Activated CD8-positive, alpha-beta memory T cell treated with anti-CD3 and anti-CD28 coated beads, Interleukin-2, amount 10 ng/mL, durations not matched to agents 7 days and 5 days (primary cell): ENCODE measurements at regions of chr2 and their contacts with region 1.

Region 1: GRCh38 chr2:25276569-25277465 is 64.9 kb downstream of the DNMT3A start:
- DNase-seq: peak; percentile 84
- ATAC-seq: peak; percentile 79
- H3K4me3 Mint-ChIP-seq: peak overlapping the region; percentile 65
- H3K27ac Mint-ChIP-seq: peak overlapping the region; percentile 92
- H3K4me1 Mint-ChIP-seq: peaks cover 70% of the 10 kb centered on the region
- H3K27me3 Mint-ChIP-seq: no peaks in the 10 kb centered on the region

Region 2: GRCh38 chr2:25257931-25258846 is 18.6 kb before region 1 on chr2:
- CTCF ChIA-PET with region 1: interaction called, 13 read pairs
- DNase-seq: no peak
- ATAC-seq: no peak
- H3K4me3 Mint-ChIP-seq: no peak overlapping the region
- H3K27ac Mint-ChIP-seq: no peak overlapping the region
- H3K4me1 Mint-ChIP-seq: peaks cover 22% of the 10 kb centered on the region
- H3K27me3 Mint-ChIP-seq: no peaks in the 10 kb centered on the region

Region 3: DNA sequence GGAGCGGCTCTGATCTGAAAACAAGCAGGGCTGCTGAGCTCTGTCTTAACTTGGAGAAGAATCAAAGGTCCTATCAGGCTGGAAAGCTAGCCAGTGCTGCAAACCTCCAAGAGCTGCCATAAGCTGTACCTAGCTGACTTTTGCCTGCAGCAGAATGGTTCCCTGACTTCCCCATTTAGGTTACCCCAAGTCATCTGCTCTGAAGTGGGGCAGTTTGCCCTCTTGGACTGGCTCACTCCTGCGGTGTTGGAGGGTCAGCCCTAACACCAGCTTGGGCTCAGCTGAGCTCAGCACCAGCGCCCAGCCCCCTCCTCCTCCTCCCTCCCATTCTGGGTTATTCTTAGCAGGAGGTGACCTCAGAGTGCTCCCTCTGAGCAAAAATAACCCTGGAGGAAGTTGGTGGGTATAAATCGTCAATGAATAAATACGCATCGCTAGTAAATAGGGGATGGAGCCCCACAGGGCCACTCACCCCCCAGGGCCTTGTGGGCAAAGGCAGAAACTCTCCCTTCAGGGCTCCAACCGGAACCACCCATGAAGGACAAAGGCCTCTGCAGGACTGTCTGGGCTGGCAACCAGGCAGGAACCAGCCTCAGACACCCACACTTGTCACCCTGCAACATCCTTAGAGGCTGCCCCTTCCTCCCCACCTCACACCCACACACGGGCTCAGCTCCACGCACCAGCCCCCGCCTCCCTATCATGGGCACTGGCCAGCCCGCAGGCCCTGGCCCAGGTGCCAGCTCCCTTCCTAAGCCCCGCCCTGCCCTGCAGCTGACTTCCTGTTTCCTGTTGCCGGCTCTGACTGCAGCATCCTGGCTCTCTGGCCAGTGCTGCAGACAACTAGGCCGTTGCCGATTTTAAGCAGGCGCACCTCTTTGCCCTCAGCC is 18.0 kb after region 1 on chr2:
- CTCF ChIA-PET with region 1: interaction called, 65 read pairs
- DNase-seq: peak; percentile 94
- ATAC-seq: peak; percentile 97
- H3K4me3 Mint-ChIP-seq: peak overlapping the region; percentile 66
- H3K27ac Mint-ChIP-seq: peak overlapping the region; percentile 93
- H3K4me1 Mint-ChIP-seq: peaks cover 57% of the 10 kb centered on the region
- H3K27me3 Mint-ChIP-seq: no peaks in the 10 kb centered on the region

Region 4: DNA sequence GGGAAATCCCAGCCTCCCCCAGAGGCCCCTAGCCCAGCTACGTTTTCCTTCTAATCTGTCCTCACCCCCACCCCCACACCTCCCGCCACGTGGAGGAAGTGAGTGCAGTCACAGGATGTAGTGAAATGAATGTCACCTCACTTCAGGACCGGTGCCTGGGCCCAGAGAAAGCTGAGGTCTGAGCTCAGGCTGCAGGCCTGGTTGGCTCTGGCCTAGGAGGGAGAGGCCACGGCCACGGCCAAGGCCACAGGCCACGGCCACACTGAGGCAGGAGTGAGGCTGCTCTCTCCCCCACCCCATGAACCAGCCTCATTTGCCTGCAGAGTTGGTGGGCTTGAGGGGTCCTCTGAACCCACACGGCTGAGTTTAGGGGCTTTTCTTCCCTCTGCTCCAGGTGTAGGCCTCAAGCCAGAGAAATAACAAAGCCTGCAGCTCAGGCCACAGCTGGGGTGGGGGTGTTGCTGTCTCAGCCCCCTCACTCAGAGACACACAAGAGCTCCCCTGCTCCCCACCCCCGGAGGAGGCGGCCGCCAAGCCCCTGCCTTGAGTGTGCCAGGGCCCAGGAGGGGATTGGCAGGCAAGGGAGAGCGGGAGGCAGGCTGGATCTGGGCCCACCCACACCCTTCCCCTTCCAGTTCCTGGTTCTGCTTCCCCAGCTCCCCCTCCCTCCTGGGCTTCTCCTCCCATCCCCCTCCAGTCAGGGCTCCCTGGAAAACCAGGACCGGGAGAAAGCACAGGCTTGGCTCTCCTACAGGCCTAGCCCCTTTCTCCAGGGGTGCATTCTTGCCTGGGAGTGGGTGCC is 37.9 kb after region 1 on chr2:
- CTCF ChIA-PET with region 1: interaction called, 38 read pairs
- DNase-seq: peak; percentile 93
- ATAC-seq: peak; percentile 92
- H3K4me3 Mint-ChIP-seq: peak overlapping the region; percentile 76
- H3K27ac Mint-ChIP-seq: peak overlapping the region; percentile 92
- H3K4me1 Mint-ChIP-seq: peaks cover 60% of the 10 kb centered on the region
- H3K27me3 Mint-ChIP-seq: no peaks in the 10 kb centered on the region

Region 5: GRCh38 chr2:25376750-25377621 is 100.2 kb after region 1 on chr2:
- CTCF ChIA-PET with region 1: interaction called, 15 read pairs
- DNase-seq: peak; percentile 97
- ATAC-seq: peak; percentile 100
- H3K4me3 Mint-ChIP-seq: peak overlapping the region; percentile 67
- H3K27ac Mint-ChIP-seq: peak overlapping the region; percentile 98
- H3K4me1 Mint-ChIP-seq: peaks cover 31% of the 10 kb centered on the region
- H3K27me3 Mint-ChIP-seq: no peaks in the 10 kb centered on the region